ENCODE measurements at regions of chr14 and their contacts with region 1.

Region 1: DNA sequence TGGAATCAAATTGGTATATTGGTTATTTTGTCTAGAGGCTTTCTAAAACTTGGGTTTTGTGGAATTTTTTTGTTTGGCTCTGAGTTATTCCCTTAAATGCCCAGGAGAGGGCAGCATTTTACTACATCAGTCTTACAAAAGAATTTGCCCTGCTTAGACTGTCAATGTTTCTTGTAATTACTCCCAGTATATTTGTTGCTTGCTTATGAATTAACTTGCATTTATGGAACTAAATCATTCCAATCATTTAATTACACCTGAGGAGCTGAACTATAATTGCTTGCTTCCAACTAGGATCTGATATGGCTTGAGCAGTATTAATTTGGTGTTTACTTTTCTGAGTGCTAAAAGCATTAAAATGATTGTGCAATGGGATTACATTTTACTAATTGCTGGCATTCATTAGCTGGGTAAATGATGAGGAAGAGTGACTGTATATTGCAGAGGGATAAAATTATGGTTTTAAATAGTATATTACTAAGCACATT is 48.7 kb downstream of the MIPOL1 start:
- DNase-seq: no peak
- ATAC-seq: peak in 3 of 4 donors; percentile 72 to 81 (median 75)
- H3K4me3 ChIP-seq: no peak overlapping the region
- H3K27ac ChIP-seq: no peak overlapping the region
- H3K4me1 ChIP-seq: peaks cover 0 to 3% (median 0%) of the 10 kb centered on the region in 3 donors
- H3K27me3 ChIP-seq: no peaks in the 10 kb centered on the region
- CTCF ChIP-seq: peak; percentile 60 to 71 (median 67)

Region 2: DNA sequence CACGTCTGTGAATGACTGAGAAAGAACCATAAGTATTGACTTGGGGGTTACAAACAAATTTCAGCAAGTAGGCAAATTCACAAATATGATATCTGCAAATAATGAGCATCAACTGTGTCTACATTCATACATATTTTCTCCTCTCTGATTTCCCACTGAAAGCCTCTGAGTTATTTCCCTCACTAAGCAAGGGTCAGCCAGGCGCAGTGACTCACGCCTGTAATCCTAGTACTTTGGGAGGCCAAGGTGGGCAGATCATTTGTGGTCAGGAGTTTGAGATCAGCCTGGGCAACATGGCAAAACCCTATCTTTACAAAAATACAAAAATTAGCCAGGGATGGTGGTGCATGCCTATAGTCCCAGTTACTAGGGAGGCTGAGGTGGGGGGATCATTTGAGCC is 154.8 kb before region 1 on chr14:
- intact Hi-C with region 1: no loop called
- DNase-seq: no peak
- ATAC-seq: no peak
- H3K4me3 ChIP-seq: no peak overlapping the region
- H3K27ac ChIP-seq: no peak overlapping the region
- H3K4me1 ChIP-seq: peaks cover 0 to 9% (median 5%) of the 10 kb centered on the region in 3 donors
- H3K27me3 ChIP-seq: no peaks in the 10 kb centered on the region
- CTCF ChIP-seq: no peak

Region 3: DNA sequence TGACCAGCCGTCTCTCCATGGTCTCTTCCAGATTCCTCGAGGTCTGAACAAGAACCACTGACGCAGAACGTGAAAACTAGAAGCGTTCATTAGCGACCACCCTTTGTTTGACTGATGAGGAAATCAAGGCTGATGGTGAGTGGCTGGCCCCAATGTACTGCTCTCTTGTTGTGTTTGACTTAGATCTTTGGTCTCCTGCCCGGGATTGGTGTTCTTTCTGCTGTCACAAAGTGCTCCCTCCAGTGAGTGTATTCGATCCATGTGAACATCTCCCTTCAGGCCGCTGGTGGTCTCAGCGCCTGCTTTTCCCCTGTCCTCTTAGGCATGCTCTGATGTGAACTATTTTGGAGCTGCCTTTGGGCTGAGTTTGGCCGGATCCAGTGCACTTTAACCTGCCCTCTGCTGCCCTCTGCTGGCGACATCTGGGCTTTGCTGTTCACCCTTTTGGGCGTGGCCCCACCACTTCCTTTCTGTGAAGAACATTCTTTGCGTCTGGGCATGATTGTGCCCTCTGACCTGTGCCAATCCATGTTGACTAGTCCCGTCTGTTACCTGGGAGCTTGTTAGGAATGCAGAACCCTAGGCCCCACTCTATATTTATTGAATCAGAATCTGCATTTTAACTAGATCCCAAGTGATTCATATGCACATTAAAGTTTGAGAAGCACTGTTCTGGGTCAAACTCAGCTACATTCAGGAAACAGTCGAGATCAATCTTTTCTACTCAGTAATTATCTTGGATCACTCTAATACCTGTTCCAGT is 628.1 kb after region 1 on chr14:
- intact Hi-C with region 1: loop called in 2 of 3 experiments (anchors 10 kb)
- DNase-seq: peak; percentile 59 to 98 (median 86)
- ATAC-seq: peak; percentile 94 to 100 (median 99)
- H3K4me3 ChIP-seq: no peak overlapping the region
- H3K27ac ChIP-seq: no peak overlapping the region
- H3K4me1 ChIP-seq: no peaks in the 10 kb centered on the region
- H3K27me3 ChIP-seq: no peaks in the 10 kb centered on the region
- CTCF ChIP-seq: peak; percentile 73 to 89 (median 86)